Common myeloid progenitor, CD34-positive (primary cell): ENCODE measurements at regions of chr17 and their contacts with region 1.

Region 1: DNA sequence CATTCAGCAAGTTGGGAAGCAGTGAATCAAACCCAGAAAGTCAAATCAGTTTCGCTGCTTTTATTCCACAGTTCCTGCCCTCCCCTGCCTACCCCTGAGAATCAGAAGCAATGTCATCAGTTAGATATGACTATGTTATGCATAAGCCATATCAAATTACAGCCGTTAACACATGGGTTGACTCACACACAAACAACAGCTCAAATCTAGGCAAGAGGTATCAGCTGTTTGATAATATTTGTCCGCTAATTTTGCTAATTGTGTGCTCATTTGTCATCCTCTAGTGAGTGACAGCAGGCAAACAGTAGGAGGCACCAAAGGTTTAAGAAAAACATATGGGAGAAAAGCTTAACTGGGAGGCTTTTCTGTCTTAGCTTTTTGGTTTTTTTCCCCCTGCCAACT is 327.4 kb upstream of the CCL2 start:
- DNase-seq: peak; percentile 45 to 73 (median 65)
- H3K4me3 ChIP-seq: no peak overlapping the region
- H3K27ac ChIP-seq: no peak overlapping the region
- H3K4me1 ChIP-seq: no peaks in the 10 kb centered on the region
- H3K27me3 ChIP-seq: peaks cover 0 to 4% (median 0%) of the 10 kb centered on the region in 5 experiments

Region 2: DNA sequence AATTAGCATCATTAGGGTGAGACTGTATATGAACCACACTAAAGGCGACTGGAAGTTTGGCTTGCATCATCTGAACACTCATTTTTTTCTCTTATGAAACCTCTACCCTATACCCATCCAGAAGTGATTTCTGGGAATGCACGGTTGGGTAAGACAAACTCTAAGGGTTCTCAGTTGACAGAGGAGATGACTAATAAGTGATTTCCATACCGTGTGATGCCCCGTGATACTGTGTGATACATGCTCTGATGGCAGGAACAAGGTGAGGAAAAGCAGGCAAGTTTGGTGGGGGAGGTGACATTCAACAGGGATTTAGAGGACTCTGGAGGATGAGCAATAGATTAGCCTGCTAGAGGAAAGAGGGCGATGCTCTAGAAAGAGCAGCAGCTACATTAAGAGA is 171.0 kb after region 1 on chr17:
- CTCF ChIA-PET with region 1: no interaction called
- POLR2A ChIA-PET with region 1: no interaction called
- DNase-seq: no peak
- H3K4me3 ChIP-seq: no peak overlapping the region
- H3K27ac ChIP-seq: no peak overlapping the region
- H3K4me1 ChIP-seq: no peaks in the 10 kb centered on the region
- H3K27me3 ChIP-seq: peaks cover 0 to 2% (median 0%) of the 10 kb centered on the region in 5 experiments

Region 3: GRCh38 chr17:34156741-34157589 is 229.2 kb after region 1 on chr17:
- CTCF ChIA-PET with region 1: interaction called, 77 read pairs
- POLR2A ChIA-PET with region 1: no interaction called
- DNase-seq: peak in 2 of 3 donors; percentile 55 to 65
- H3K4me3 ChIP-seq: peak overlapping the region in 5 of 7 experiments; percentile 1 to 67 (median 56)
- H3K27ac ChIP-seq: no peak overlapping the region
- H3K4me1 ChIP-seq: peaks cover 0 to 46% (median 27%) of the 10 kb centered on the region in 4 experiments
- H3K27me3 ChIP-seq: peaks cover 5 to 39% (median 11%) of the 10 kb centered on the region in 5 experiments

Region 4: GRCh38 chr17:34163646-34164045 is 235.9 kb after region 1 on chr17:
- CTCF ChIA-PET with region 1: interaction called, 77 read pairs
- POLR2A ChIA-PET with region 1: no interaction called
- DNase-seq: peak; percentile 51 to 63 (median 62)
- H3K4me3 ChIP-seq: no peak overlapping the region
- H3K27ac ChIP-seq: no peak overlapping the region
- H3K4me1 ChIP-seq: peaks cover 0 to 16% (median 2%) of the 10 kb centered on the region in 4 experiments
- H3K27me3 ChIP-seq: peaks cover 0 to 10% (median 0%) of the 10 kb centered on the region in 5 experiments